ENCODE measurements at regions of chr16 and their contacts with region 1.

Region 1: GRCh38 chr16:19067349-19068236 is at the start of gene COQ7:
- DNase-seq: peak; percentile 95
- H3K4me3 ChIP-seq: peak within 1 kb of the TSS; percentile 74 to 94
- H3K27ac ChIP-seq: peak within 1 kb of the TSS; percentile 92 to 99
- H3K4me1 ChIP-seq: no peaks in the 10 kb centered on the region; a peak in 1 of 4 replicates
- H3K27me3 ChIP-seq: no peaks in the 10 kb centered on the region
- CTCF ChIP-seq: no peak
- EP300 ChIP-seq: no peak
- RAD21 ChIP-seq: no peak
- polyA plus RNA-seq, gene COQ7: 17.9 and 24.0 TPM in 2 replicates

Region 2: DNA sequence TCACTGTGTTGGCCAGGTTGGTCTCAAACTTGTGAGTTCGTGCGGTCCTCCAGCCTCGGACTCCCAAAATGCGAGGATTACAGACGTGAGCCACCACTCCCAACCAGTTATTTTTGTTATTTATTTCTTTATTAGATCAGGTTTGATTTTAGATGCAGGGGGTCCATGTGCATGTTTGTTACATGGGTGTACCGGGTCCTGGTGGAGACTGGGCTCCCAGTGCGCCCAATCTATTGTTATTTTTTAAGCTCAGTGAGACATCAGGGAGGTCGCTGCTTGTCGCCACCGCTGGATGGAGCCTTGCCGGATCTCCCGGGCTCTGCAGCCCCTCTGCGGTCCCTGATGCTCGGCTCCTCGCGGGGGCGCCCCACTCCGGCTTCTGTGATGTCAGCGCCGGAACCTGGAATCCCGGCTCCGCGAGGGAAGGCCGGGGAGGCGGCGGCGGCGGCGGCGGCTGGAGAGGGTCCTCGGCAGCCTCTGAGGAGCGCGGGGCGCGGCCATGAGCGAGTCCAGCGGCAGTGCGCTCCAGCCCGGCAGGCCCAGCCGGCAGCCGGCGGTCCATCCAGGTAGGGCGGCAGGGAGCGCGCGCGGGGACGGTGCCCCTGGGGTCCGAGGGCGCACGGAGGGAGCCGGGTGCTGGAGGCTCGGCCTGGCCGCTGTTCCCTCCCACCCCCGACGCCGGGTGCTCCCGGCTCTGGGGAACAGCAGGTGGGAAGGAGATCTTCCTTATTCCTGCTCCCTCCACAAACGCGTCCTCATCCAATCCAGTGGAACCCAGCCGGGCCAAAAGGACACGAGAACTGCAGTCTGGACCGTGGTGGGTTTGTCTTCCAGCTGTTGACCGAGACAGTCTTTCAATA is 83.8 kb before region 1 on chr16 and contains the start of gene TMC7:
- CTCF ChIA-PET with region 1: interaction called, 17 read pairs
- POLR2A ChIA-PET with region 1: interaction called, 3 read pairs
- DNase-seq: peak; percentile 94
- H3K4me3 ChIP-seq: peak within 1 kb of the TSS; percentile 61 to 77
- H3K27ac ChIP-seq: peak within 1 kb of the TSS; percentile 24 to 33; a peak in 2 of 4 replicates
- H3K4me1 ChIP-seq: peaks cover 0 to 3% of the 10 kb centered on the region in 2 experiments; a peak in 1 of 4 replicates
- H3K27me3 ChIP-seq: no peaks in the 10 kb centered on the region
- CTCF ChIP-seq: peak; percentile 87
- EP300 ChIP-seq: no peak
- RAD21 ChIP-seq: peak; percentile 77
- polyA plus RNA-seq, gene TMC7: 0.66 and 0.93 TPM in 2 replicates

Region 3: DNA sequence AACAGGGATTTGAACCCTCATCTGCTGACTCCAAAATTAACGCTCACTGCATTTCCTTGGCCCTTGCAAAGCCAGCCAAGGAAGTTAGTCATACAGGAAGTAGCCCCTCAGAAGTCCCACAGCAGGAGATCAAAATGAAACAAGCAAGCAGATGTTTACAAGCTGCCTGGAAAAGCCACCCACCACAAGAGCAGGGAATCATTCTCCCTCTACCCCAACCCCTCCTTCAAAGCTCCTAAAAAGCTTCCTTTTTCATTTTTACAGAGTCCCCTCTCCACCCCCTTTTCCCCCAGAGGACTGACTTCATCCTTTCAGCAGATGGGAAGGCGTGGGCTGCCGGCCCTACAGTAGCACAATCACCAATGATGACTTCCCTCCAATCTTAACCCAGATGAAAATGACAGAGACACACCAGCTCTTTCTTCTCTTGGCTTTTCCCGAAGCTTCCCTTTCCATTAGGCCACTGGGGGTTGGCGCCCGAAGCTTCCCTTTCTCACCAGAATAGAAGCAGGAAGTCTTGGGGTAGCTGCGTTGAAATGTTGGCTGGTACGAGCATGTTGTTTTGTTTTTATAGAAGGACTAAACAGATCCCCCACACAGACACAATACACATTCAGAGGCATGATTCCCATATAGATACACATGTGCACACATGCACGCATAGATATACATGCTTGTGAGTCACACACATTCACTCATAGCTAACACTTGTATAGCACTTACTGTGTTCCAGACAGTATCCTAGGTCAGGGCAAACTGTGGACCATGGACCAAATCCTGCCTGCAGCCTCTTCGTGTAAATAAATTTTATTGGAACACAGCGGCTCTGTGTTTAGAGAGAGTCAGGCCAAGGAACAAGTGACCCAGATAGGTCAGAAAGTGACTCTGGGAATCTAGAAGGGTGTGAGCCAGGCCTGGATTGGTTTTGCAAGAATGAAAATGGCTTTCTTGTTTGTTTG is 63.5 kb after region 1 on chr16:
- CTCF ChIA-PET with region 1: no interaction called
- POLR2A ChIA-PET with region 1: no interaction called
- DNase-seq: no peak
- H3K4me3 ChIP-seq: no peak overlapping the region; a peak in 1 of 4 replicates
- H3K27ac ChIP-seq: peak overlapping the region in 1 of 2 experiments; percentile 58; a peak in 2 of 4 replicates
- H3K4me1 ChIP-seq: peaks cover 4 to 42% of the 10 kb centered on the region in 2 experiments; a peak in 2 of 4 replicates
- H3K27me3 ChIP-seq: no peaks in the 10 kb centered on the region
- CTCF ChIP-seq: no peak
- EP300 ChIP-seq: no peak
- RAD21 ChIP-seq: no peak